Naive thymus-derived CD4-positive, alpha-beta T cell (primary cell): ENCODE measurements at regions of chr4 and their contacts with region 1.

Region 1: GRCh38 chr4:7192252-7193029 is at the start of gene SORCS2:
- DNase-seq: peak in 7 of 9 donors; percentile 25 to 68 (median 34)
- ATAC-seq: peak; percentile 73
- H3K4me3 ChIP-seq: no peak within 1 kb of the TSS
- H3K4me3 Mint-ChIP-seq: peak within 1 kb of the TSS in 8 of 10 donors; percentile 43 to 76 (median 56)
- H3K27ac ChIP-seq: no peak within 1 kb of the TSS
- H3K27ac Mint-ChIP-seq: no peak within 1 kb of the TSS
- H3K4me1 ChIP-seq: no peaks in the 10 kb centered on the region
- H3K4me1 Mint-ChIP-seq: peaks cover 0 to 7% (median 0%) of the 10 kb centered on the region in 7 donors
- H3K27me3 ChIP-seq: peaks cover 0 to 6% of the 10 kb centered on the region in 2 donors
- H3K27me3 Mint-ChIP-seq: peaks cover 38 to 70% (median 60%) of the 10 kb centered on the region in 5 donors
- total RNA-seq, gene SORCS2: 0.10 TPM in 1 of 5 experiments, not detected in the others

Region 2: GRCh38 chr4:7335344-7336069 is 143.1 kb after region 1 on chr4:
- CTCF ChIA-PET with region 1: no interaction called
- POLR2A ChIA-PET with region 1: no interaction called
- intact Hi-C with region 1: loop called in 1 of 2 experiments (anchors 5 kb)
- DNase-seq: peak in 7 of 9 donors; percentile 6 to 54 (median 16)
- ATAC-seq: peak; percentile 36
- H3K4me3 ChIP-seq: no peak overlapping the region
- H3K4me3 Mint-ChIP-seq: no peak overlapping the region
- H3K27ac ChIP-seq: no peak overlapping the region
- H3K27ac Mint-ChIP-seq: no peak overlapping the region
- H3K4me1 ChIP-seq: no peaks in the 10 kb centered on the region
- H3K4me1 Mint-ChIP-seq: peaks cover 0 to 3% (median 0%) of the 10 kb centered on the region in 7 donors
- H3K27me3 ChIP-seq: no peaks in the 10 kb centered on the region
- H3K27me3 Mint-ChIP-seq: peaks cover 0 to 4% (median 0%) of the 10 kb centered on the region in 5 donors

Region 3: GRCh38 chr4:7719354-7720174 is 527.1 kb after region 1 on chr4:
- CTCF ChIA-PET with region 1: no interaction called
- POLR2A ChIA-PET with region 1: no interaction called
- intact Hi-C with region 1: loop called in 1 of 2 experiments (anchors 2 kb)
- DNase-seq: peak; percentile 8 to 67 (median 48)
- ATAC-seq: peak; percentile 73
- H3K4me3 ChIP-seq: no peak overlapping the region
- H3K4me3 Mint-ChIP-seq: peak overlapping the region in 3 of 10 donors; percentile 21 to 45 (median 41)
- H3K27ac ChIP-seq: no peak overlapping the region
- H3K27ac Mint-ChIP-seq: peak overlapping the region in 1 of 9 donors; percentile 27
- H3K4me1 ChIP-seq: no peaks in the 10 kb centered on the region
- H3K4me1 Mint-ChIP-seq: peaks cover 0 to 11% (median 6%) of the 10 kb centered on the region in 7 donors
- H3K27me3 ChIP-seq: peaks cover 0 to 3% of the 10 kb centered on the region in 2 donors
- H3K27me3 Mint-ChIP-seq: peaks cover 0 to 33% (median 7%) of the 10 kb centered on the region in 5 donors